Ovary (tissue), 10 donors: ENCODE measurements at regions of chr3 and their contacts with region 1.

Region 1: GRCh38 chr3:44861412-44862220 is at the start of gene TMEM42:
- DNase-seq: peak; percentile 88 to 94 (median 92)
- H3K4me3 ChIP-seq: peak within 1 kb of the TSS; percentile 69
- H3K27ac ChIP-seq: peak within 1 kb of the TSS; percentile 72 to 79
- H3K4me1 ChIP-seq: peaks cover 5% of the 10 kb centered on the region
- H3K27me3 ChIP-seq: no peaks in the 10 kb centered on the region
- CTCF ChIP-seq: peak in 1 of 3 donors; percentile 19
- EP300 ChIP-seq: no peak
- POLR2A ChIP-seq: peak; percentile 81
- total RNA-seq, gene TMEM42: 11.2 to 24.0 (median 14.6) TPM

Region 2: GRCh38 chr3:44814751-44815150 is 46.9 kb before region 1 on chr3:
- intact Hi-C with region 1: no loop called
- DNase-seq: no peak
- H3K4me3 ChIP-seq: no peak overlapping the region
- H3K27ac ChIP-seq: no peak overlapping the region
- H3K4me1 ChIP-seq: no peaks in the 10 kb centered on the region
- H3K27me3 ChIP-seq: no peaks in the 10 kb centered on the region
- CTCF ChIP-seq: no peak
- EP300 ChIP-seq: no peak
- POLR2A ChIP-seq: no peak

Region 3: GRCh38 chr3:44966750-44967278 is 105.2 kb after region 1 on chr3:
- intact Hi-C with region 1: loop called in 1 of 4 experiments (anchors 10 kb)
- DNase-seq: no peak
- H3K4me3 ChIP-seq: no peak overlapping the region
- H3K27ac ChIP-seq: no peak overlapping the region
- H3K4me1 ChIP-seq: no peaks in the 10 kb centered on the region
- H3K27me3 ChIP-seq: no peaks in the 10 kb centered on the region
- CTCF ChIP-seq: no peak
- EP300 ChIP-seq: no peak
- POLR2A ChIP-seq: no peak

Region 4: DNA sequence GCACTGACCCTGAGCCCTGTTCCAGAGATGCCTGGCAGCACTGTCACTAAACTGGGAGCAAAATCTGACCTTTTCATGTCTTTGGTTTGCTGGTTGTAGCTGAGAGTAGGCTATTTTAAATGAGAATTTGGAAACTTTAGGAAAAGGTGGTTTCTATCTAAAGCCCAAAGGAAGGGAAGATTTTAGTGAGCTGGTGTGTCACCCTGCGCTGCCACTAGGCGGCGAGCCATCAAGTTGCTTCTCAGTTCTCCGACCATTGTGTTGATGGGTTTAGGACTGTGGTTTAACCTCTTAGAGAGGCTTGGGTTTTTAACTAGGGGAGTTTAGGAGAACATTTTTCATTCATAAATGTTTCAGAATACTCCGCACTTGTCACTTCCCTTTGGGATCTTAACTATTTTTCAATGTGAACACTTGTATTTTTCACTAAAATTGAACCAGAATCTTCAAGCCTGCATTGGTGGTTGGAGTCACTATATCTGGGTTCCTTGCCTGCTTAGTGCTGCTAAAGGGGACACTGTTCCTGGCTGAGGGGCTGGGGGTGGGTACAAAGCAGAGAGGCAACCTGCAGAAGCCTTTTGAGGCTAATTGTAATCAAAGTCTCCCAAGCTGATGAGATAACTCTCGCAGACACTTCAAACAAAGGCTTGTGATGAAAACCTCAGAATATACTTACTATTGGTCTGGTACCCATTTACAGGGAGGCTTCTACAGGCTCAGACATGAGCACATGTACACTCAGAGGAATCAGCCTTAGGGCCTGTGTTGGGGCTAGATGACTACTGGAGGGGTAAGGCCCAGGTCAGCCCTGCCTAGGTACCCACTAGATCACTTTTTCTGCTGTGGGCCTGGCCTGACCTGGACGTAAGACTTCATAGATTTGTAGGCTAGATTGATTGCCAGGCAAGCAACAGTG is 131.2 kb after region 1 on chr3:
- intact Hi-C with region 1: no loop called
- DNase-seq: no peak
- H3K4me3 ChIP-seq: no peak overlapping the region
- H3K27ac ChIP-seq: no peak overlapping the region
- H3K4me1 ChIP-seq: peaks cover 7% of the 10 kb centered on the region
- H3K27me3 ChIP-seq: no peaks in the 10 kb centered on the region
- CTCF ChIP-seq: peak in 1 of 3 donors; percentile 23
- EP300 ChIP-seq: no peak
- POLR2A ChIP-seq: no peak

Region 5: DNA sequence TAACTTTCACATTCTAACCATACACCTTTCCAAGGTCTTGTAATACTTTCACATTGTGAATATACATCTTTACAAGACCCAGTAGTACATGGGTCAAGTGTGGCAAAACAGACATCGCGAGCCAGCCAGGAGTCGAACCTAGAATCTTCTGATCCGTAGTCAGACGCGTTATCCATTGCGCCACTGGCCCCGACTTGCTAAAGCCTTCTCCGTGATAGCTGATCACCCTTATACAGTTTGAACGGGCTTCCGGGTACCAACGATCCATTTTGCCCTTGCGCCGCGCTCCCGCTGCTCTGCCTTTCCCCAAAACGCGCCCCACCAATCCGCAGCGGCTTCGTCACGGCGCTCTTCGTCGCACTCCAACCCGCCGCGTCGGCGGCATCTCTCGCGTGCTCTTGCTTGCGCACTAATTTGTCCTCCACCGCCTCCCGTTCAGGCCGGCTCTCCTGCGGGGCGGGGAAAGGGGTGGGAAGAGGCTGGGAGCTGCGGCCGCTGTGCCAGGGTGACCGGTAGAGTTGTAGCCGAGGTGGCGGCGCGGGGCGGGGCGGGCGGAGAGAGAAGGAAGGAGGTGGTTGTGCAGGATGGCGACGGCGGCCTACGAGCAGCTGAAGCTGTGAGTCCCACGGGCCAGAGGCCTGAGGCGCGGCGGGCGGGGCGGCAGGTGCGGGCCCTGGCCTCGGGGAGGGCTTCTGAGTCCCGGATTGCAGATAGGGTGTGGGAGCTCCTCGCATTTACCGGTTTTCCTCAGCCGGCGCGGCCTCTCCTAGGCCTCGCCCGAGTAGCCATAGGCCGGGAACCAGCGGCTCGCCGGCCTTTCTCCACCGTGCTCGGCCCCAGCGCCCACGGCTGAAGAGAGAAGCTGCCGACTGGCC is 827.5 kb after region 1 on chr3 and contains the start of gene SACM1L:
- intact Hi-C with region 1: loop called in 1 of 4 experiments (anchors 5 kb)
- DNase-seq: peak; percentile 96 to 98 (median 97)
- H3K4me3 ChIP-seq: peak within 1 kb of the TSS; percentile 61
- H3K27ac ChIP-seq: peak within 1 kb of the TSS; percentile 8 to 70
- H3K4me1 ChIP-seq: peaks cover 5% of the 10 kb centered on the region
- H3K27me3 ChIP-seq: no peaks in the 10 kb centered on the region
- CTCF ChIP-seq: no peak
- EP300 ChIP-seq: no peak
- POLR2A ChIP-seq: no peak
- total RNA-seq, gene SACM1L: 25.7 to 47.3 (median 39.6) TPM

Region 6: DNA sequence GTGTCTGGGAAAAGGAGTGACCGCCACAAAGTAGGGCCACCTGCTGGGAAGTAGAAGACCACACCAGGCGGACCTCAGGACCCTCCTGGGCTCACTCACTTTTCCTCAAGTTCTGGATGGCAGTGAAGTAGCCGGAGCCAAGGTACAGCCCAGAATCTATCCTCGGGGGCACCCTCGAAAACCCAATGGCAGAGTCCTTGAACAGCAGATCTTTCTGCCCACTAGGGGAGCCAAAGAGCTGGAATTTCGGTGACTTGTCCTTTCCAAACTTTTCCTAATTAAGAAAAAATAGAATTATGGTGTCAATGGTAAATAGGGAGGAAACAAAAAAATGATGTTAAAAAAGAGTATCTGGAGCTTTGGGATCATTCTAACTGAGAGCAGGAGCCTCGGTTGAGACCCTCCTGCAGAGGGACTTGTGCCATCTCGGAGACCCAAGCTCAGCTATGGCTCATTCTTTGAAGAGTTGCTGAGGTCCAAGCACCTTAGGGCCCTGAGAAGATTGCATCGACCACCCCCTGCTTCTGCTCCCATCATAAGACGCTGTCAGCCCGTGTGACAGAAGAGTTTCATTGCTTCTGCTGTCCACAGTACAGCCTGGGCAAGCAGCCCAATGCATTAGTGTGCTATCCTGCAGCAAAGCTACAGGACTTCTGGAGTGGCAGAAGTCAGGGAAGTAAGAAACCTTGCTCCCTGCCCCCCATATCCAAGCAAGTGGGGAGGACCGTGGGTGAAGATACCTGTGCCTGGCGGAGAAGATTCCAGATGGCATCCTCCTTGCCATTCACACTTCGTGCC is 1588.3 kb after region 1 on chr3:
- intact Hi-C with region 1: no loop called
- DNase-seq: no peak
- H3K4me3 ChIP-seq: no peak overlapping the region
- H3K27ac ChIP-seq: no peak overlapping the region
- H3K4me1 ChIP-seq: no peaks in the 10 kb centered on the region
- H3K27me3 ChIP-seq: no peaks in the 10 kb centered on the region
- CTCF ChIP-seq: no peak
- EP300 ChIP-seq: no peak
- POLR2A ChIP-seq: no peak